Right cardiac atrium (tissue), 5 donors: ENCODE measurements at regions of chr15 and their contacts with region 1.

Region 1: DNA sequence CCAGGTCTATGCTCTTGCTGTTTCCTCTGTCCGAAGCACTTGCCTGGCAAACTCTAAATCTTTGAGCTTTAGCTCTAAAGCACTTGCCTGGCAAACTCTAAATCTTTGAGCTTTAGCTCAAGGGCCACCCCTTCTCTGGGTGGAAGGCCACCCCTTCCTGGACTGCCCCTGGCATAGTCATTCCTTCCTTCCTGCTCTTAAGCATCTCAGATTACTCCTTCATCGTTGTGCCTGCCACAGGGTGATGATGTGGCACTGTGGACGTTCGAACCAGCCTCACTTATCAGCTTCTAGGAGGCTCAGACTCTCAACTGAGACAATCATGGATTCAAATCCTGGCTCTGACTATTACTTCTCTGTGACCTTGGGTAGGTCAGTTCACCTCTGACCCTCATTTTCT is 10.5 kb upstream of the CRABP1 start:
- DNase-seq: no peak
- ATAC-seq: no peak
- H3K4me3 ChIP-seq: no peak overlapping the region
- H3K27ac ChIP-seq: no peak overlapping the region
- H3K4me1 ChIP-seq: peaks cover 3% of the 10 kb centered on the region
- H3K27me3 ChIP-seq: no peaks in the 10 kb centered on the region

Region 2: GRCh38 chr15:78405336-78405924 is 75.8 kb after region 1 on chr15:
- intact Hi-C with region 1: loop called in 1 of 4 experiments (anchors 5 kb)
- DNase-seq: no peak
- ATAC-seq: no peak
- H3K4me3 ChIP-seq: no peak overlapping the region
- H3K27ac ChIP-seq: no peak overlapping the region
- H3K4me1 ChIP-seq: no peaks in the 10 kb centered on the region
- H3K27me3 ChIP-seq: no peaks in the 10 kb centered on the region

Region 3: DNA sequence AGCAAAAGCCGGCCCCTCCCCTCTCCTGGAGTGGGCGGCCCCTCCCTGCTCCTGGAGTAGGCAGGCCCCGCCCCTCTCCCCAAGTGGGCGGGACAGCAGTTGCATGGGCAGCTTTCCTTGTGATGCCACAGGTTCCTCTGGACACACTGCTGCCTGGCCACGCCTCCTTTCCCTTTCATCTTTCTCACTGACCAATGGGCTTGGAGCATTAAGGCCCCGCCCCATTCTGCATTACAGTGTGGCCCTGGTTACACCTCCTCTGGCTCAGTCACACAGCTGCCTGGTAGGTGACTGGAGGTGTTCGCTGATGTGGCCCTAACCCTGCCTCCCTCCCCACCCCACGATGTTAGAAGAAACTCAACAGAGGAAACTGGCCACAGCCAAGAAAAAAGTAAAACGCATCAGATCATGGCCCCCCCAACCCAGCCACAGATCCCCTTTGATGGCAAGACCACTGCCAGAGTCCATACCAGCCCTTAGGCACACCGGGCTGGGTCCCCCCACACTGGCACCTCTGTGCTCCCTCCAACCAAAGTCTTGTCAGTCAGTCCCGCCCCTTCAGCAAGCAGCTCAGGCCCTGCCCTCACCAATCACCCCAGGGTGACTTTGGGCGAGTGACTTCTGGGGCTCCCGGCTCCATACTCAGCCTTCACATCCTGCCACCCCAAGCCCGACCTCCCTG is 397.4 kb after region 1 on chr15:
- intact Hi-C with region 1: no loop called
- DNase-seq: no peak
- ATAC-seq: no peak
- H3K4me3 ChIP-seq: no peak overlapping the region
- H3K27ac ChIP-seq: no peak overlapping the region
- H3K4me1 ChIP-seq: no peaks in the 10 kb centered on the region
- H3K27me3 ChIP-seq: no peaks in the 10 kb centered on the region